ENCODE measurements at regions of chr12 and their contacts with region 1.

Region 1: DNA sequence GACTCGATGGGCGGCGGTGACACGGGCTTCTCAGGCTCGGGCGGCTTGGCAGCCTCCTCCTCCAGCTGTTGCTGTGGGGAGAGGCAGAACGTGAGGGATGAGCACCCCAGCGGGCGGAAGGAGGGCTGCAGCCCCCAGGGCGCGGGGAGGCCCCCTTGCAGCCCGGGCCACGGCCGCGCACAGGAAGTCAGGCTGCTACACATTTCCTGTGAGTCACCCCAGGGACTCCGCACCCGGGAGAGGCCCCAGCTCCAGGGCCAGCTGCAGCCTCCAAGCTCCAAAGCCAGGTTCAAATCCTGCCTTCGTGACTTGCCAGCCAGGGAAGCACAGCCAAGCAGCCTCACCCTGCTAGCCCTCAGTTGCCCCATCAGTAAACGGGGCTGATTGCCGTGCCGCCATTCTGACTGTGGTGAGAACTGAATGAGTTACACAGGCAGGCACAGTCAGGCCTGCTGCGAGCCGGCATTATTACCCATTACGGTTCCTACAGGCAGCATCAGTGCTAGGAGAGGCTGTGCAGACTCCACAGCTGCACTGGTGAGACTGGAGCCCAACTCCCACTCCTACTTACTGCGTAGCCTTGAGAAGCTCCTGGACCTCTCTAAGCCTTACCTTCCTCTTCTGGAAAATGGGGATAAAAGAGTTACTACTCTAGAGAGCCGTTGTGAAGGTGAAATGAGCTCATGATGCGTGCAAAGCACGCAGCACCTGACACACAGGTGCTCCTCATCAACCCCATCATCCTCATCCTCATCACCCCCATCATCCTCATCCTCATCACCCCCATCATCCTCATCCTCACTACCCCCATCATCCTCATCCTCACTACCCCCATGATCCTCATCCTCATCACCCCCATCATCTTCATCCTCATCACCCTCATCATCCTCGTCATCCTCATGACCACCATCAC is 100.9 kb downstream of the NCOR2 start:
- DNase-seq: peak; percentile 94
- H3K4me3 Mint-ChIP-seq: peak overlapping the region; percentile 50
- H3K27ac Mint-ChIP-seq: peak overlapping the region; percentile 75
- H3K4me1 Mint-ChIP-seq: peaks cover 48% of the 10 kb centered on the region
- H3K27me3 Mint-ChIP-seq: no peaks in the 10 kb centered on the region

Region 2: DNA sequence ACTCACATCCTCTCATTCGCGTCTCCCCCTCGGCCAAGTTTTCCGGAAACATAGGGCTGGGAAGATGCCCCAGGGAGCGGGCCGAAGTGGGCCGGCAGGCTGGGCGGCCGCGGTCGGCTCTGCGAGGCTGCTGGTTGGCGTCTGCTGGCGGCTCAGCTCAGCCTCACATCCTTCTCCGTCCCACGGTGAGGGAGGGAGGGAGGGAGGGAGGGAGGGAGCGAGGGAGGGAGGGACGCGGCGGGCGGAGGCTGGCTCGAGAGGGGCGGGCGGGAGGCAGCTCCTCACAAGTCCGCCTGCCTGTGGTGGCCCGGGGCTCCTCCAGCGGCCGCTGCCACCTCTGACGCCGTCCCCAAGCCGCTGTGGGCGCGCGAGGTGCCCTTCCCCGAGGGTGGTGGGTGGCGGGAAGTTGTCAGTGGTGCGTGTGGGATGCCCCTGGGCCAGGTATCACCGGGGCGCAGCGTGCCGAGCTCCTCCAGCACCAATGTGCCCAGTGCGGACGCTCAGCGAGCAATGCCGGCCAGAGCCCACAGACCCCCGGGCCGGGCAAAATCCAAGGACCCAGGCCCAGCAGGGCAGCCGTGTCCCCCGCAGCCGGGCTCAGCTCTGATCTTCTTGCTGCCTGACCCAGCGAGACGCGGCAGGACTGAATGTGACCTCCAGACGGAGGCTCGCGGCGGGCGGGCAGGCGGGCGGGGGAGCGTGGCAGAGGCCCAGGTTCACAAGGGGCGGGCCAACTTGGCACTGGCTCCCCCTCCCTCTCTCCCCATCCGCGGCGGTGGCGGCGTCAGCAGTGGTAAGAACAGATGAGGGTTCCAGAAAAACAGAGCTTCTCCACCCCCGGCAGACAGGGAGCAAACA is 77.6 kb before region 1 on chr12:
- CTCF ChIA-PET with region 1: interaction called, 3 read pairs
- POLR2A ChIA-PET with region 1: interaction called, 4 read pairs
- intact Hi-C with region 1: loop called (anchors 2 kb)
- DNase-seq: peak; percentile 79
- H3K4me3 Mint-ChIP-seq: peak overlapping the region; percentile 29
- H3K27ac Mint-ChIP-seq: no peak overlapping the region
- H3K4me1 Mint-ChIP-seq: peaks cover 35% of the 10 kb centered on the region
- H3K27me3 Mint-ChIP-seq: no peaks in the 10 kb centered on the region

Region 3: DNA sequence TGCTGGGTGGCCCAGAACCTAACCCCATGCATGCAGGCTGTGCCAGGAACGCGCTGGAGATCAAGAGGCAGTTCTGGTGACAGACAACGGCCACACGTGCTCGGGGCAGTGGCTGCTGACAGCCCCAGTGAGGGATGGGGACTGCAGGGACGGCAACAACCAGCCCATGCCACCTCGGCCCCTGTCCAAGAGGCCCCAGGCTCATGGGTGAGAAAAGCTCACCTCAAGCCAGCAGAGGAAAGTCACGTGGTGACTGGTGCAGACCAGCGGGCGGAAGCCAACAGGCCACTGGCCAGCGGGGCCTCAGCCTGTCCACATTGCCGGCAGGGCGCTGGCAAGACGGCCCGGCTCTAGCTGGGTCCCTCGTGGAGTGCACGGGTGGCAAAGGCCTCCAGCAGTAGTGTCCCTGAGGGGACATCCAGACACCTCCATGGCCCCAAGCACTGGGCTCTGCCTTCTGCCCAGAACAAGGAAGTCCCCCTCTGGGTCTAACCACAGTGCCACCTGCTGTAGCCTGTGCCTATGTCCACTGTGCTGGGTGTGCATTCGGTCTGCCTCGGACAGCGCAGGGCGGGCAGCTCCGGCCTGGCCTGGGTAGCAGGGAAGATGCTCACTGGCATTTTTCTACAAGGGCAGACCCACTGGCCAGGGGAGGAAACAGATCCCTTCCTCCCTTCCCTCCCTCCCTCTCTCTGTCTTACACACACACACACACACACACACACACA is 33.2 kb before region 1 on chr12:
- CTCF ChIA-PET with region 1: no interaction called
- POLR2A ChIA-PET with region 1: no interaction called
- intact Hi-C with region 1: no loop called
- DNase-seq: no peak
- H3K4me3 Mint-ChIP-seq: no peak overlapping the region
- H3K27ac Mint-ChIP-seq: no peak overlapping the region
- H3K4me1 Mint-ChIP-seq: no peaks in the 10 kb centered on the region
- H3K27me3 Mint-ChIP-seq: no peaks in the 10 kb centered on the region

Region 4: DNA sequence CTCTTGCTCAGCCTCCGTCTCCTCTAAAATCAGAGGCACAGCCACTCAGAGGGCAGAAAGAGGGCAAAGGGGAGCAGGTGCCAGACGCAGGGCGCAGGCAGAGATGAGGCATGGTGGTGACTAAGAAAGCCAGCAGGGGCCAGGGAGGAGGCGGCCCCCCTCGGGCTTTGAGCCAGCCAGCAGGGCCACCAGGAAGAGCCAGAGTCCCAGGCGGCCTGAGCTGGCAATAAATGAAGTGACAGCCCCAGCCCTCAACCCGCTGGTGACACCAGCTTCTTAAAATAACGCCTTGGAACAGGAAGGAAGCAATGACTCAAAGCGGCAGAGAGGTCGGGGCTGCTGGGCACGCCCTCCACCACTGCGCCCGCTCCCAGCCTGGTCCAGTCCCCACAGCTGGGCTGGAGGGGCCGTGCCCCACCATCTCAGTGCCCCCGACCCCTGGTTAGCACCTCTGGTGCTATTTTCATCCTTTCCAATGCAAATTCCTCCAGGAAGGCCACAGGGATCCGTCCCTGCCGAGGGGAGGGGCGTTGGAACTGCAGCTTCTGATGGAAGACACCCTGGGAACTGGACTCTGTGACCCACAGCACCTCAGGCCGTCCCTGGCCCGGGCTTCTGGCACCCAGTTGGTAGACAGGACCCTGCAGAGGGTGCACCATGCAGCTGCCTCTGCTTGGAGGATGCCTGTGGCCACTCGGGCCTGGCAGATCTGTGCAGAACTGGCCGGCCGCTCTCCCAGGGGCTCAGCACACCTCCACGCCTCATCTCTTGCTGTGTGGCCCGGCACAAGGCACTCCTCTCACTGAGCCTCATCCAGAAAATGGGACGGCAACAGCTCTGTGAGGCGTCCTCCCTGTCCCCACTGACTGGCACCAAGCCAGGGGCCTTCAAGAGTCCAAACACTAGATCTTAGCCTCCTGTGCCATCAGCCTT is 12.8 kb before region 1 on chr12:
- CTCF ChIA-PET with region 1: interaction called, 15 read pairs
- POLR2A ChIA-PET with region 1: interaction called, 12 read pairs
- intact Hi-C with region 1: loop called (anchors 1 kb)
- DNase-seq: peak; percentile 94
- H3K4me3 Mint-ChIP-seq: peak overlapping the region; percentile 12
- H3K27ac Mint-ChIP-seq: peak overlapping the region; percentile 54
- H3K4me1 Mint-ChIP-seq: peaks cover 52% of the 10 kb centered on the region
- H3K27me3 Mint-ChIP-seq: no peaks in the 10 kb centered on the region

Region 5: DNA sequence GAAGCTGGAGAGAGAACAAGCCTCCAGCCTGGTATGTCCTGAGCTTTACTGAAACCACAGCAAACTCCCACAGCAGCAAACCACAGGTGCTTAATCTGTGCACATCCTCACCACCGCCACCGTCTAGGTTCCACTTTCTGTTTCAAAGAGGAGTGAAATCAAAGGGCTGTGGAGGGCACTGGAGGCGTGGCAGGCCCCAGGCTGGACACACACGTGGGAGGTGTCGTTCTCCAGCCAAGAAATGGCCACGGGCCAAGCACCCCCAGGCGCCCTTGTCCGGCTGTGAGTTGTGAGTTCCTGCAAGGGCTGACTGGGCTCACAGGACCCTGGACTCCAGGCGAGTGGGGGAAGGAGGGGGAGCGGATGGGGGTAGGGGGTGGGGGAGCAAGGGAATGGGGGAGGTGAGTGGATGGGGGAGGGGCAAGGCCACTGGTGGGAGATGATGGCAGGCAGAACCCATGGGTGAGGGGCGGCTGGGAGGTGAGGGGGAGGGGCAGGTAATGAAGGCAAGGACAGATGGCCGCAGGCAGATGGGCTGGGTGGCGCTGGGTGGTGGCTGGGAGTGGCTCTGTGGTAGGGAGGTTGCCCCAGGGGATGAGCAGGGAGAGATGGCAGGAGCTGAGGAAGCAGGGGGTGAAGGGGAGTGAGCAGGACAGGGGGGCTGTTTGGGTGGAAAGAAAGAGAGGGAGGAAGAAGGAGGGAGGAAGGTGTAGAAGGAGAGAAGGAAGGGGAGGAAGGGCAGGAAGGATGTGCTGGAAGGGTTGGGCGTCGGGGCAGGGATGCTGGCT is 14.2 kb after region 1 on chr12:
- CTCF ChIA-PET with region 1: interaction called, 5 read pairs
- POLR2A ChIA-PET with region 1: interaction called, 4 read pairs
- intact Hi-C with region 1: loop called (anchors 2 kb)
- DNase-seq: peak; percentile 77
- H3K4me3 Mint-ChIP-seq: no peak overlapping the region
- H3K27ac Mint-ChIP-seq: peak overlapping the region; percentile 28
- H3K4me1 Mint-ChIP-seq: peaks cover 40% of the 10 kb centered on the region
- H3K27me3 Mint-ChIP-seq: no peaks in the 10 kb centered on the region

Region 6: GRCh38 chr12:124493809-124494750 is 27.6 kb after region 1 on chr12:
- CTCF ChIA-PET with region 1: interaction called, 8 read pairs
- POLR2A ChIA-PET with region 1: no interaction called
- intact Hi-C with region 1: loop called (anchors 1 kb)
- DNase-seq: peak; percentile 86
- H3K4me3 Mint-ChIP-seq: no peak overlapping the region
- H3K27ac Mint-ChIP-seq: peak overlapping the region; percentile 81
- H3K4me1 Mint-ChIP-seq: peaks cover 49% of the 10 kb centered on the region
- H3K27me3 Mint-ChIP-seq: no peaks in the 10 kb centered on the region